ENCODE measurements at regions of chr5 and their contacts with region 1.

Region 1: DNA sequence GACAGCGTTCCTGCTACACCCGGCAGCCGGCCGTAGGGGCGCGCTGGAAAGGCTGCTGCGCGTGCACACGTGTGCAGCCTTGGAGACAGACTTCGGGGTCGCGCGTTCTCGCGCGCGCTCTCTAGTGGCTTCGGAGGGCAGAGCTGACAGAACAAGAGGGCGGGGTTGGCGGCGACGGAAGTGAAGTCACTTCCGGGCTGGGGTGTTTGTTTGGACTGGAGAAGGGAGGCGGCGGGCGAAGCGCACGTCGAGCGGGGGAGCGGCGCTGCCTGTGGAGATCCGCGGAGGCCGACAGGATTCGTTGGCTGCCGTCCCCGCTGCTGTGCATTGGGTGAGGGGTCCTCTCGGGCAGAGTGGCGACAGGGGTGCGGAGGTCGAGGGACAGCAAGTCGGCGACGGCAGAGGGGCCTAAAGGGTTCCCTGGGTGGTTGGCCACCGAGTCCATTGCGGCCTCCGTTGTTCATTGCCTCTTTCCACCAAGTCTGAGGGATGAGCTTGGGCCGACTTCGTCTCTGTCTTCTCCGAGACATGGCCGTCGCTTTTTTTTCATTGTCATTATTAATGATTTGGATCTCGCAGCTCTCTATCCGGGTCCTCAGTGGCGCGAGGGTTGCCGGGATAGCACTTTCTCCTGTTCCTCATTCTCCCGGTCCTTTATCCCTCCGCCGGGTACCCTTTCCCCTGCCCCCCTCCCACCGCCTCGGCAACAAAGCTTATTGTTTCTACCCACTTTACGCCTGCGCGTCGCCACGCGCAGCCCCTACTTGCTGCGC is at the start of gene PAIP2:
- DNase-seq: peak; percentile 96 to 99 (median 97)
- H3K4me3 ChIP-seq: peak within 1 kb of the TSS; percentile 83 to 99
- H3K4me3 Mint-ChIP-seq: peak within 1 kb of the TSS; percentile 94 to 100 (median 97)
- H3K27ac ChIP-seq: peak within 1 kb of the TSS; percentile 98
- H3K27ac Mint-ChIP-seq: peak within 1 kb of the TSS; percentile 97 to 100 (median 99)
- H3K4me1 ChIP-seq: peaks cover 35% of the 10 kb centered on the region
- H3K4me1 Mint-ChIP-seq: peaks cover 35 to 62% (median 51%) of the 10 kb centered on the region in 4 donors
- H3K27me3 ChIP-seq: no peaks in the 10 kb centered on the region
- H3K27me3 Mint-ChIP-seq: no peaks in the 10 kb centered on the region
- total RNA-seq, gene PAIP2: 109 to 112 TPM

Region 2: GRCh38 chr5:138575194-138576015 is 766.4 kb before region 1 on chr5 and contains the start of gene HSPA9:
- CTCF ChIA-PET with region 1: interaction called, 3 read pairs
- POLR2A ChIA-PET with region 1: interaction called, 3 read pairs
- intact Hi-C with region 1: loop called (anchors 1 kb)
- DNase-seq: peak; percentile 98 to 99 (median 98)
- H3K4me3 ChIP-seq: peak within 1 kb of the TSS; percentile 88 to 99
- H3K4me3 Mint-ChIP-seq: peak within 1 kb of the TSS; percentile 92 to 99 (median 98)
- H3K27ac ChIP-seq: peak within 1 kb of the TSS; percentile 99
- H3K27ac Mint-ChIP-seq: peak within 1 kb of the TSS; percentile 100
- H3K4me1 ChIP-seq: peaks cover 28% of the 10 kb centered on the region
- H3K4me1 Mint-ChIP-seq: peaks cover 18 to 51% (median 35%) of the 10 kb centered on the region in 4 donors
- H3K27me3 ChIP-seq: no peaks in the 10 kb centered on the region
- H3K27me3 Mint-ChIP-seq: no peaks in the 10 kb centered on the region
- total RNA-seq, gene HSPA9: 144 to 171 TPM

Region 3: GRCh38 chr5:139149477-139150199 is 192.2 kb before region 1 on chr5:
- CTCF ChIA-PET with region 1: no interaction called
- POLR2A ChIA-PET with region 1: no interaction called
- intact Hi-C with region 1: no loop called
- DNase-seq: no peak
- H3K4me3 ChIP-seq: no peak overlapping the region
- H3K4me3 Mint-ChIP-seq: no peak overlapping the region
- H3K27ac ChIP-seq: no peak overlapping the region
- H3K27ac Mint-ChIP-seq: peak overlapping the region in 1 of 7 donors; percentile 74
- H3K4me1 ChIP-seq: no peaks in the 10 kb centered on the region
- H3K4me1 Mint-ChIP-seq: peaks cover 0 to 5% (median under 1%) of the 10 kb centered on the region in 4 donors
- H3K27me3 ChIP-seq: no peaks in the 10 kb centered on the region
- H3K27me3 Mint-ChIP-seq: no peaks in the 10 kb centered on the region

Region 4: GRCh38 chr5:139273572-139274289 is 68.1 kb before region 1 on chr5:
- CTCF ChIA-PET with region 1: interaction called, 10 read pairs
- POLR2A ChIA-PET with region 1: interaction called, 18 read pairs
- intact Hi-C with region 1: loop called (anchors 1 kb)
- DNase-seq: peak; percentile 82 to 91 (median 86)
- H3K4me3 ChIP-seq: peak overlapping the region; percentile 14 to 65
- H3K4me3 Mint-ChIP-seq: peak overlapping the region; percentile 85 to 91 (median 87)
- H3K27ac ChIP-seq: peak overlapping the region; percentile 58
- H3K27ac Mint-ChIP-seq: peak overlapping the region; percentile 74 to 94 (median 90)
- H3K4me1 ChIP-seq: peaks cover 55% of the 10 kb centered on the region
- H3K4me1 Mint-ChIP-seq: peaks cover 29 to 55% (median 38%) of the 10 kb centered on the region in 4 donors
- H3K27me3 ChIP-seq: no peaks in the 10 kb centered on the region
- H3K27me3 Mint-ChIP-seq: no peaks in the 10 kb centered on the region

Region 5: DNA sequence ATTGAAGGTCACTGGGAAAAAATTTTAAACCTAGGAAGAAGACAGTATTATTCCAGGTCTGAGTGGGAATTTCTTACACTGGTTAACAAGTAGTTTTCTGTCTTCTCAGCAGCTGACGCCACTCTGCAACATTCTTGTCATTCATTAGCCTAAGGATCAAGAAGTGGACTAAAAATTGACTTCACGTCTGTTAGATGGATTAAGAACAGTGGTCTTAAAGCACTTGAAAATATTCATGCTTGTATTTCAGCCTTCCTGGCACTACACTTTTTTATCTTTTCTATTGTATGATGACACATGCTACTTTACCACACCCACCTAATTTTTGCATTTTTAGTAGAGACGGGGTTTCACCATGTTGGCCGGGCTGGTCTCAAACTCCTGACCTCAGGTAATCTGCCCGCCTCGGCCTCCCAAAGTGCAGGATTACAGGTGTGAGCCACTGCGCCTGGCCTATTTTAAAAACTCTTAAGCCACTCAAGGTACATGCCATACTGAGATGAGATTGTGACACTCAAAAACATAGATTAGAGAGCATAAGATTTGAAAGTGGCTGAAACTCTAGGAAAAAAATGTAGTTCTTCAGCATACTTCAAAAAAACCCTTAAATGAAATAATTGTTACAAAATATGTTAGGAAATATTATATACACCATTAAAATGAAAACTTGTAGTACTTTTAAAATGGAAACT is 39.9 kb before region 1 on chr5:
- CTCF ChIA-PET with region 1: interaction called, 10 read pairs
- POLR2A ChIA-PET with region 1: interaction called, 149 read pairs
- intact Hi-C with region 1: no loop called
- DNase-seq: no peak
- H3K4me3 ChIP-seq: no peak overlapping the region
- H3K4me3 Mint-ChIP-seq: peak overlapping the region in 7 of 8 donors; percentile 63 to 99 (median 72)
- H3K27ac ChIP-seq: no peak overlapping the region
- H3K27ac Mint-ChIP-seq: peak overlapping the region; percentile 49 to 99 (median 77)
- H3K4me1 ChIP-seq: peaks cover 99% of the 10 kb centered on the region
- H3K4me1 Mint-ChIP-seq: peaks cover 69 to 97% (median 85%) of the 10 kb centered on the region in 4 donors
- H3K27me3 ChIP-seq: no peaks in the 10 kb centered on the region
- H3K27me3 Mint-ChIP-seq: no peaks in the 10 kb centered on the region

Region 6: DNA sequence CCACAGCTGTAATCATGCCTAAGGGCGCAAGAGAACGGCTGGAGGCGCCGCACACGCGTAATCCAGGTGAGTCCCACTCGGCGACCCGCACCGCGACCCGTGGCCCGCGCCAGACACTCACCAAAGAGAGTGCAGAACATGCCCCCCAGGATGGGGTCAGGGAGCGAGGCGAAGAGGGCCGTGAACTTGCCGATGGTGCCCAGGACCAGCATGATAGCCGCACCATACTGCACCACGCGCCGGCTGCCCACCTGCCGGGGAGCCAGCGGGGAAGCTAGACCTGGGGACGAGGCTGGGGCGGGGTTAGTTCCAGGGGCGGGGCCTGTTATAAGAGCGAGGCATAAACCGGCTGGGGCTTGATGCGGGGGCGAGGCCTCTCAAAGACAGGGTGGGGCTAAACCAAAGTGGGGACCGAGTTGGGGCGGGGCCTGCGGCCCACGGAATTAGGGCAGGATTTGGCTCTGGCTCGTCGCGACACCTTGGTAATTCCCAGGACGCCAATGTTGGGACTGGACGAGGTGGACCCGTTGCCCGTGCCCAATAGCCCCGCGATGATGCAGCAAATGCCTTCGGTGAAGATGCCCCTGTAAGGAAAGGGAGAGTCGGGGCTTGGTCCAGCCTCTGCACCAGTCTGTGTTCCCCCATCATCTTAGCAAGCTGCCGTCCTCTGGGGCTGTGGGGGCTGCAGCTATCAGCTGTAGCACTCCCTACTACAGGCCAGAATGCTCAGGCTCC is 36.4 kb after region 1 on chr5:
- CTCF ChIA-PET with region 1: no interaction called
- POLR2A ChIA-PET with region 1: no interaction called
- intact Hi-C with region 1: no loop called
- DNase-seq: no peak
- H3K4me3 ChIP-seq: no peak overlapping the region
- H3K4me3 Mint-ChIP-seq: no peak overlapping the region
- H3K27ac ChIP-seq: no peak overlapping the region
- H3K27ac Mint-ChIP-seq: no peak overlapping the region
- H3K4me1 ChIP-seq: no peaks in the 10 kb centered on the region
- H3K4me1 Mint-ChIP-seq: peaks cover 0 to 6% (median under 1%) of the 10 kb centered on the region in 4 donors
- H3K27me3 ChIP-seq: no peaks in the 10 kb centered on the region
- H3K27me3 Mint-ChIP-seq: no peaks in the 10 kb centered on the region

Region 7: DNA sequence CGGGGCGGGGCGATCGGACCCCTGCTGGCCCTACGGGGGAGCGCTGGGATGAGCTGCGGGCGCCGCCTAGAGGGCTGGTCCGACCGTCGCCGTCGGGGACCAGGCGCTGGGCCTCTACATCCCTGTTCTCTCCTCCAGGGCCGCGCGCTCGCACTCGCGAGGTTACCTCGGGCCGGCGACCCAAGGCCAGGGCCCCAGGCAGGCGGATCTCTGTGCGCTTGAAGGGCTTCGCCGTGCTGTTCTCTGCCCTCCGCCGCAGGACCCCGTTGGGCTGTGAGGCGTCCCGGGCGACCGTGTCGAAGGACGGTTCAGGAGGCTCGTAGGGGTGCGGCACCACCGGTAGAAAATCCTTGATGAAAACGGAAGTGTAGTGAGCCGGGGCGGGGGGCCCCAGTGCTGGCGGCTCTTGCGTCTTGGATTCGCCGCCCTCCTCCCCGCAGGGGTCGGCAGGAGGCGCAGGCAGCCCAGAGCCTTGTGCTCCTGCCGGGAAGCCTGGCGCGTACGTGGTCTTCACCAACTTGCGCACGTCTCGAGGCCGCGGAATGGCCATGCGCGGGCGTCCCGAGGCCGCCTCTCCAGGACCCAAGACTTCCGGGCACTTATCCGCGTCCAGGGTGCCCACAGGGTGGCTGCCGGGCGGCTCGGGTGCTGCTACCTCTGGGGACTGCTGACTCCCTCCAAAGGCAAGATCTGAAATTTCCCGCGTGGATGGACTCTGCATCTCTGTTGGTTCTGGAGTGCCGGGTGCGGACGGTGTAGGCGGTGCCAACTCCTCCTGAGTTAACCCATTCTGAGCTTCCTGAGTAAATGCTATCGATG is 51.1 kb after region 1 on chr5:
- CTCF ChIA-PET with region 1: interaction called, 4 read pairs
- POLR2A ChIA-PET with region 1: interaction called, 22 read pairs
- intact Hi-C with region 1: loop called (anchors 1 kb)
- DNase-seq: peak; percentile 69 to 81 (median 73)
- H3K4me3 ChIP-seq: peak overlapping the region; percentile 61 to 69
- H3K4me3 Mint-ChIP-seq: peak overlapping the region; percentile 88 to 94 (median 88)
- H3K27ac ChIP-seq: peak overlapping the region; percentile 39
- H3K27ac Mint-ChIP-seq: peak overlapping the region; percentile 57 to 93 (median 85)
- H3K4me1 ChIP-seq: peaks cover 42% of the 10 kb centered on the region
- H3K4me1 Mint-ChIP-seq: peaks cover 22 to 43% (median 30%) of the 10 kb centered on the region in 4 donors
- H3K27me3 ChIP-seq: no peaks in the 10 kb centered on the region
- H3K27me3 Mint-ChIP-seq: no peaks in the 10 kb centered on the region

Region 8: GRCh38 chr5:140113699-140114263 is 771.9 kb after region 1 on chr5 and contains the start of gene PURA:
- CTCF ChIA-PET with region 1: no interaction called
- POLR2A ChIA-PET with region 1: no interaction called
- intact Hi-C with region 1: loop called (anchors 2 kb)
- DNase-seq: peak; percentile 97 to 98 (median 98)
- H3K4me3 ChIP-seq: peak within 1 kb of the TSS; percentile 76 to 88
- H3K4me3 Mint-ChIP-seq: peak within 1 kb of the TSS; percentile 94 to 100 (median 96)
- H3K27ac ChIP-seq: peak within 1 kb of the TSS; percentile 80
- H3K27ac Mint-ChIP-seq: peak within 1 kb of the TSS; percentile 93 to 98 (median 97)
- H3K4me1 ChIP-seq: peaks cover 79% of the 10 kb centered on the region
- H3K4me1 Mint-ChIP-seq: peaks cover 43 to 81% (median 67%) of the 10 kb centered on the region in 4 donors
- H3K27me3 ChIP-seq: no peaks in the 10 kb centered on the region
- H3K27me3 Mint-ChIP-seq: no peaks in the 10 kb centered on the region
- total RNA-seq, gene PURA: 31.2 to 36.2 TPM

Measured in CD4-positive, alpha-beta memory T cell (primary cell).